GM12878 (cell line): ENCODE measurements at regions of chr20 and their contacts with region 1.

Region 1: GRCh38 chr20:20518263-20518662 is 150.4 kb downstream of the INSM1 start:
- DNase-seq: no peak
- ATAC-seq: no peak
- H3K4me3 ChIP-seq: no peak overlapping the region
- H3K27ac ChIP-seq: no peak overlapping the region
- H3K4me1 ChIP-seq: no peaks in the 10 kb centered on the region
- H3K27me3 ChIP-seq: no peaks in the 10 kb centered on the region
- CTCF ChIP-seq: no peak
- EP300 ChIP-seq: no peak
- POLR2A ChIP-seq: no peak
- RAD21 ChIP-seq: no peak

Region 2: GRCh38 chr20:20505554-20505953 is 12.7 kb before region 1 on chr20:
- CTCF ChIA-PET with region 1: interaction called, 3 read pairs
- POLR2A ChIA-PET with region 1: no interaction called
- RAD21 ChIA-PET with region 1: no interaction called
- SMC1A ChIA-PET with region 1: interaction called, 13 read pairs
- in situ Hi-C with region 1: no loop called
- intact Hi-C with region 1: no loop called
- DNase-seq: no peak
- ATAC-seq: peak; percentile 54
- H3K4me3 ChIP-seq: no peak overlapping the region
- H3K27ac ChIP-seq: no peak overlapping the region
- H3K4me1 ChIP-seq: no peaks in the 10 kb centered on the region
- H3K27me3 ChIP-seq: no peaks in the 10 kb centered on the region
- CTCF ChIP-seq: no peak
- EP300 ChIP-seq: no peak
- POLR2A ChIP-seq: no peak
- RAD21 ChIP-seq: no peak